Mammary epithelial cell (primary cell): ENCODE measurements at regions of chr14 and their contacts with region 1.

Region 1: GRCh38 chr14:99995700-99996356 is 69.4 kb upstream of the EVL start:
- DNase-seq: peak; percentile 49
- H3K4me3 ChIP-seq: no peak overlapping the region
- H3K27ac ChIP-seq: no peak overlapping the region
- H3K4me1 ChIP-seq: peaks cover 18% of the 10 kb centered on the region
- H3K27me3 ChIP-seq: no peaks in the 10 kb centered on the region
- CTCF ChIP-seq: peak; percentile 87

Region 2: DNA sequence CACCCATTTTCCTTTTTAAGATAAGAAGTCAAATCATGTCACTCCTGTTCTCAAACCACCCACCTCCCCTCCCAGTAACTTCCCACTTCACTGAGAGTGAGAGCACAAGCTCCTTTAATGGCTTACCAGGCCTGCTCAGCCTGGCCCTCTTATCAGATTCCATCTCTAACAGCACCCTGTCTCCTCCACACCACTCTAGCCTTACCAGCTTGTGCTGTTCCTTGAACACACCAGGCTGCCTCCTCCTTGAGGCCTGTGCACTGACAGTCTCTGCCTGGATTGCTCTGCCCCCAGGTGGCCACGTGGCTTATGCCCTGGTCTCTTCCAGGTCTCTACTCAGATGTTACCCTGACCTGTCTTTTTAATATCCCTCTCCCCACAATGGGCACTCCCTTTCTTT is 29.3 kb after region 1 on chr14:
- CTCF ChIA-PET with region 1: interaction called, 3 read pairs
- dilution Hi-C with region 1: loop called (anchors 5 kb)
- in situ Hi-C with region 1: loop called in 1 of 2 experiments (anchors 5 kb)
- intact Hi-C with region 1: loop called (anchors 1 kb)
- DNase-seq: peak; percentile 37
- H3K4me3 ChIP-seq: no peak overlapping the region
- H3K27ac ChIP-seq: no peak overlapping the region
- H3K4me1 ChIP-seq: peaks cover 7% of the 10 kb centered on the region
- H3K27me3 ChIP-seq: no peaks in the 10 kb centered on the region
- CTCF ChIP-seq: peak; percentile 33 to 71

Region 3: GRCh38 chr14:100031536-100032281 is 35.9 kb after region 1 on chr14:
- CTCF ChIA-PET with region 1: no interaction called
- dilution Hi-C with region 1: loop called (anchors 5 kb)
- in situ Hi-C with region 1: loop called in 1 of 2 experiments (anchors 5 kb)
- intact Hi-C with region 1: loop called (anchors 2 kb)
- DNase-seq: peak; percentile 97
- H3K4me3 ChIP-seq: peak overlapping the region; percentile 51 to 61 (median 55)
- H3K27ac ChIP-seq: peak overlapping the region; percentile 88
- H3K4me1 ChIP-seq: peaks cover 38% of the 10 kb centered on the region
- H3K27me3 ChIP-seq: no peaks in the 10 kb centered on the region
- CTCF ChIP-seq: peak; percentile 7 to 9

Region 4: GRCh38 chr14:100067971-100068959 is 72.4 kb after region 1 on chr14:
- CTCF ChIA-PET with region 1: no interaction called
- dilution Hi-C with region 1: loop called (anchors 5 kb)
- in situ Hi-C with region 1: no loop called
- intact Hi-C with region 1: no loop called
- DNase-seq: peak; percentile 79
- H3K4me3 ChIP-seq: no peak overlapping the region
- H3K27ac ChIP-seq: peak overlapping the region; percentile 37
- H3K4me1 ChIP-seq: peaks cover 26% of the 10 kb centered on the region
- H3K27me3 ChIP-seq: no peaks in the 10 kb centered on the region
- CTCF ChIP-seq: no peak

Region 5: DNA sequence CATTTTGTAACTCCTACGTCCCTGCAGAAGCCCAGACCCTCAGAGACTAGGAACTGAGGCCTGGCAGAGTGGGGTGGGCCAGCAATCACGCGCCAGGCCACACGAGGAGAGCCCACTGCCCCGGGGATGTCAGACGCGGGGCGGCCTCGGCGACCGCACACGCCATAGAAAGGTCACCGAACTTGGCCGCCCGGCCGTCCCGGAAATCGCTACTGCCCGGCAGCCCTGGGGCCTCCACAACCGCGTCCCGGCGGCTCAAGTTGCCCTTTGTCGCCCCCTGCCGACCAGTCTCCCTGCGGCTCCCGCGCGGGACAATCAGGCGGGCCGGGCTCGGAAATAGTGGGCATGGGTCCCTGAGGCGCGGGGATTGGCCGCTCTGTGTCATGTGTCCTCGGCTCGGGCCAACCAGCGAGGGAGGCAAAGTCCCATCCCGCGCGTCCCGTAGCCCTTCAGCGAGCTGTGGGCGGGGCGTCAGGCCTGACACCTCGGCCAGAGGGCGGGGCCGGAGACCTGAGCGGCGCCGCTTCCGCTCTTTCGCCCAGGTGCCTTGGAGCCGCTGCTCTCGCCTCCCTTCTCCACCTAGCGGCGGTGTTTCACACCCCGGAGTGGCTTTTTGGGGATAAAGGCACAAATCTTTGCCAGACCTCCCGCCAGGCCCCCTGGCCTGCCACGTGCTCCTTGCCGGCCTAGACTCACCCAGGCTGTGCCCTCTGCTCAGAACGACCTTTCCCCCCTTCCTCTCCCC is 197.0 kb after region 1 on chr14:
- CTCF ChIA-PET with region 1: no interaction called
- dilution Hi-C with region 1: no loop called
- in situ Hi-C with region 1: no loop called
- intact Hi-C with region 1: no loop called
- DNase-seq: peak; percentile 99
- H3K4me3 ChIP-seq: peak overlapping the region; percentile 36 to 59 (median 43)
- H3K27ac ChIP-seq: peak overlapping the region; percentile 66
- H3K4me1 ChIP-seq: peaks cover 13% of the 10 kb centered on the region
- H3K27me3 ChIP-seq: no peaks in the 10 kb centered on the region
- CTCF ChIP-seq: peak; percentile 61